Activated CD4-positive, alpha-beta memory T cell treated with anti-CD3 and anti-CD28 coated beads for 36 hours (primary cell): ENCODE measurements at regions of chr22 and their contacts with region 1.

Region 1: DNA sequence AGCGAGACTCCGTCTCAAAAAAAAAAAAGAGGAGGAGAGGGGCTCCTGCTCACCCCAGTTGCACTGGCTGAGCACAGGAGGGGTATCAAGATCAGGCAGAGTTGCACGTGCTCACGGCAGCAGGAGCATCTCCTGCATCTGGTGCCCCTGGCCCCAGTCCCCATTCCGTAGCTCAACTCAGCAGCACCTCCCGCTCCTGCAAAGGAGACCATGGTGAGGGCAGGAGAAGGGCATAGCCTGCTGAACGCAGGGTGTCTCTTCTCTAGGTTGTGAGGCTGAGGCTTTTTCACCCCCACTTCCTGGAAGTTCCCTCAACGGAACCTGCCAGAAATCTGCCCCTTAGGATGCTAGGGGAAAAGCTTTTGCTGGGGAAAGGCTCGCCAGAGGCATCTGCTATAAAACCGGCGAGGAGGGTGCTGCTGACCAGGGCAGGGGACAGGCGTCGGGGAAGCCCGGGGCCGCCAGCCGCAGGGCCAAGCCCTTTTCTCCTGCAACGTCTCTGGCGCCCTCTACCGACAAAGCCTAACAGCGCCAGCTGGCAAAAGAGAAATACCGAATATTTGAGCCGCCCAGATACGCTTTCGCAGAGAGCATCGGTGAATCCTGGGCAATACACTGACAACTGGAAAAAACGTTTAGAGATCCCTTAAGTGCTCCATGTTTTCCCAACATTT is 1.0 kb upstream of the PPP6R2 start:
- DNase-seq: peak; percentile 92
- H3K4me3 Mint-ChIP-seq: peak overlapping the region; percentile 72
- H3K27ac Mint-ChIP-seq: peak overlapping the region; percentile 83
- H3K4me1 Mint-ChIP-seq: peaks cover 10% of the 10 kb centered on the region
- H3K27me3 Mint-ChIP-seq: no peaks in the 10 kb centered on the region

Region 2: DNA sequence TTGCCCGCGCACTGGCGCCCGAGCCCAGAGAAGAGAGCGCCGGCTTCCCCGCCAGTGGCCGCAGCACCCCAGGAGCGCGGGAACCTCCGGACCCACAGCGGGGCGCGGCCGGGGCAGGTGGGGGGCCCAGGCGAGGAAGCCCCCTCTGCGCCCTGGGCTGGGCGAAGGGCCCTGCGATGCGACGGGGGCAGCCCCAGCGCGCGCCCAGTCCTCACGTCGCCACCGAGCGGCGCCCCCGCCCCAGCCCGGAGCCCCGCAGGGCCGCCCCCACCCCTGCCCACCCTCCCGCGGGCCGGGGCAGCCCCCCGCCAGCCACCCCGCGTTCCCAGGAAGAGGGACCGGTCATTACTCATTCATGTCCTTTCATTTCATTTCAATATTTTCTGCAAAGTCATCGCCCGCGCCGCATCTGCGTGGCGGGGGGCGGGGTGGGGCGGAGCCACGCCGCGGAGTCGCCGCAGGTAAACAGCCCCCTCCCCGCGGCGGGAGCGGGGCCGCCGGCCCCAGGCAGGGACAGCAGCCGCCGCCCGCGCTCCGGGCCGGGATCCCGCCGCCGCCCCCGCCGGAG is 172.3 kb before region 1 on chr22:
- CTCF ChIA-PET with region 1: no interaction called
- POLR2A ChIA-PET with region 1: no interaction called
- intact Hi-C with region 1: no loop called
- DNase-seq: peak; percentile 84
- H3K4me3 Mint-ChIP-seq: peak overlapping the region; percentile 35
- H3K27ac Mint-ChIP-seq: no peak overlapping the region
- H3K4me1 Mint-ChIP-seq: peaks cover 9% of the 10 kb centered on the region
- H3K27me3 Mint-ChIP-seq: peaks cover 29% of the 10 kb centered on the region

Region 3: DNA sequence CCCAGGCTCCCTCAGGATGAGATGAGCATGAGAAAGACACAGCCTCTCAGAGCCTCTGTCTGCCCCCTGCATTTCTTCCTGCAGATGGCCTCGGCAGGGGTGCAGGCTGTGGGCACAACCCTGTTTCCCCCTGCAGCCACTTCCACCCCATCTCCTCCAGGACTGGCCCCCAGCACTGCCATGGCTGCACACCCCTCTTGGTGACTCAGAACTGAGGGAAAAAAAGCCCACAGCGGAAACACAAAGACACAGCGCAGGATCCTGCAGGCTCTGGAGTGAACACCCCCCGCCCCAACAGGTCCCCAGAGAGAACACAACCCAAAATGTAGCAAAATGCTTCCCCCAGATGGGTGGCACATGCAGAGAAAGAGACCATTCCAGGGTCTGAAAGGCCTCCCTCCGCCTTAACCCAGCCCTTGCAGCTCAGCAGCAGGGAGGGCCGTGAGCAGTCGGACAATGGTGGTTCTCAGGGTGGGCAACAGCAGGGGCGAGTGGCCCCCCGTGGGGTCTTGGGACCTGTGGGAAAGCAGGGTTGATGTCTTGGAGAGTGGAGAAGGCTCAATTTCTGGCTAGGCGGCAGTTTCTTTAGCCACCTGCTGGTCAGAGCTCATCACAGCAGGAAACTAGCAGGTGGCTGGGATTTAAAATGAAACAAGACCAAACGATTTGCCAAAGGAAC is 105.2 kb before region 1 on chr22:
- CTCF ChIA-PET with region 1: interaction called, 34 read pairs
- POLR2A ChIA-PET with region 1: no interaction called
- intact Hi-C with region 1: no loop called
- DNase-seq: no peak
- H3K4me3 Mint-ChIP-seq: no peak overlapping the region
- H3K27ac Mint-ChIP-seq: no peak overlapping the region
- H3K4me1 Mint-ChIP-seq: peaks cover 12% of the 10 kb centered on the region
- H3K27me3 Mint-ChIP-seq: no peaks in the 10 kb centered on the region

Region 4: GRCh38 chr22:50250555-50251476 is 91.3 kb before region 1 on chr22 and contains the start of gene HDAC10:
- CTCF ChIA-PET with region 1: interaction called, 23 read pairs
- POLR2A ChIA-PET with region 1: interaction called, 3 read pairs
- intact Hi-C with region 1: no loop called
- DNase-seq: peak; percentile 91
- H3K4me3 Mint-ChIP-seq: peak within 1 kb of the TSS; percentile 84
- H3K27ac Mint-ChIP-seq: peak within 1 kb of the TSS; percentile 51
- H3K4me1 Mint-ChIP-seq: peaks cover 24% of the 10 kb centered on the region
- H3K27me3 Mint-ChIP-seq: no peaks in the 10 kb centered on the region
- total RNA-seq, gene HDAC10: 46.1 to 47.6 TPM

Region 5: DNA sequence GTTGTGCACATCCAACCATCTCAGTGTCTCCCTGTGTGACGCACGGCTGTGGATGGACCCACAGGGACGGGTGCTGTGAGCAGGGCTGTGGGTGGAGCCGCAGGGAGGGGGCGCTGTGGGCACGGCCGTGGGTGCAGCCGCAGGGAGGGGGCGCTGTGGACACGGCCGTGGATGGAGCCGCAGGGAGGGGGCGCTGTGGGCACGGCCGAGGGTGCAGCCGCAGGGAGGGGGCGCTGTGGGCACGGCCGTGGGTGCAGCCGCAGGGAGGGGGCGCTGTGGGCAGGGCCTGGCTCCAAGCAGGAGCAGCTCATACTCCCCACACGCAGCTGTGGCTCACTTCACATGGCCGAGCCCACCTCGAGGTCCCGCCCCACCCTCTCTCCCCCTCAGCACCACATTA is 66.0 kb before region 1 on chr22:
- CTCF ChIA-PET with region 1: interaction called, 13 read pairs
- POLR2A ChIA-PET with region 1: no interaction called
- intact Hi-C with region 1: loop called (anchors 1 kb)
- DNase-seq: peak; percentile 78
- H3K4me3 Mint-ChIP-seq: no peak overlapping the region
- H3K27ac Mint-ChIP-seq: no peak overlapping the region
- H3K4me1 Mint-ChIP-seq: no peaks in the 10 kb centered on the region
- H3K27me3 Mint-ChIP-seq: no peaks in the 10 kb centered on the region

Region 6: DNA sequence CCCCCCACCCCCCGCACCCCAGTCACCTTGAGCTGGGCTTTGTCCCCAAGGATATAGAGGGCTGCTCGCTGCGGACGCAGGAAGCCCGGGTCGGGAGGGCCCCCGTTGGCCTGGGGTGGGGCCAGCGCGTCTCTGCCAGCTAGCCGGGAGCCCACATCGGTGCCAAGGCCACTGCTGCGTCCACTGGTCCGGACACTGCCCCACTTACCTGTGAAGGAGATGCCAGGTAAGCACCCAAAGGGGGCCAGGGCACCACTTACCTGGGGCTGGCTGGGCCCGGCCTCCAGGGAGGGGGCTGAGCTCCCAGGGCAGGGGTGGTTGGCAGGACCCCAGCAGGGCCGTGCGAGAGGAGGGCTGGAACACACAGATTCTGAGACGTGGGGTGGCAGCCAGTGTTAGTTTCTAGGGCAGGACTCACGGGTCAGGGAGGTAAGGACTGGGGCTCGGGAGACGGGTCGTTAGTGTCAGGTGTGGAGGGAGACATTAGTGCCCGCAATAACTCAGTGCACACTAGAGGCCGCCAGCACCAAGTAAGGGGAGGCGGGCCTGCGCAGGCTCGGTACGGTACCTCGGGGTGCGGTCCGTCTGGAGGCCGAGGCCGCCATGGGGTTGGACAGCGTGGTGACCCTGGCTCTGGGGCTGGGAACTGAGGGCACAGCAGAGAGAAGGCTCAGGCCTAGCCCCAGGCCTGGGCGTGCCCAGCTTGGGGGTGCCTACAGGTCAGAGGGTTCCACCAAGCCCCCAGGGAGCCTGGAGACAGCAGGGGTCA is 114.5 kb after region 1 on chr22:
- CTCF ChIA-PET with region 1: no interaction called
- POLR2A ChIA-PET with region 1: no interaction called
- intact Hi-C with region 1: no loop called
- DNase-seq: no peak
- H3K4me3 Mint-ChIP-seq: no peak overlapping the region
- H3K27ac Mint-ChIP-seq: no peak overlapping the region
- H3K4me1 Mint-ChIP-seq: peaks cover 13% of the 10 kb centered on the region
- H3K27me3 Mint-ChIP-seq: no peaks in the 10 kb centered on the region

Region 7: GRCh38 chr22:50474668-50475492 is 132.8 kb after region 1 on chr22 and contains the start of gene SBF1:
- CTCF ChIA-PET with region 1: no interaction called
- POLR2A ChIA-PET with region 1: no interaction called
- intact Hi-C with region 1: loop called (anchors 5 kb)
- DNase-seq: peak; percentile 93
- H3K4me3 Mint-ChIP-seq: peak within 1 kb of the TSS; percentile 95
- H3K27ac Mint-ChIP-seq: peak within 1 kb of the TSS; percentile 78
- H3K4me1 Mint-ChIP-seq: peaks cover 47% of the 10 kb centered on the region
- H3K27me3 Mint-ChIP-seq: no peaks in the 10 kb centered on the region
- total RNA-seq, gene SBF1: 110 to 112 TPM